ENCODE measurements at regions of chr9 and their contacts with region 1.

Region 1: GRCh38 chr9:123550797-123551196 is 194.8 kb downstream of the CRB2 start:
- DNase-seq: no peak
- ATAC-seq: no peak
- H3K4me3 ChIP-seq: no peak overlapping the region
- H3K27ac ChIP-seq: no peak overlapping the region
- H3K4me1 ChIP-seq: no peaks in the 10 kb centered on the region
- H3K27me3 ChIP-seq: no peaks in the 10 kb centered on the region

Region 2: DNA sequence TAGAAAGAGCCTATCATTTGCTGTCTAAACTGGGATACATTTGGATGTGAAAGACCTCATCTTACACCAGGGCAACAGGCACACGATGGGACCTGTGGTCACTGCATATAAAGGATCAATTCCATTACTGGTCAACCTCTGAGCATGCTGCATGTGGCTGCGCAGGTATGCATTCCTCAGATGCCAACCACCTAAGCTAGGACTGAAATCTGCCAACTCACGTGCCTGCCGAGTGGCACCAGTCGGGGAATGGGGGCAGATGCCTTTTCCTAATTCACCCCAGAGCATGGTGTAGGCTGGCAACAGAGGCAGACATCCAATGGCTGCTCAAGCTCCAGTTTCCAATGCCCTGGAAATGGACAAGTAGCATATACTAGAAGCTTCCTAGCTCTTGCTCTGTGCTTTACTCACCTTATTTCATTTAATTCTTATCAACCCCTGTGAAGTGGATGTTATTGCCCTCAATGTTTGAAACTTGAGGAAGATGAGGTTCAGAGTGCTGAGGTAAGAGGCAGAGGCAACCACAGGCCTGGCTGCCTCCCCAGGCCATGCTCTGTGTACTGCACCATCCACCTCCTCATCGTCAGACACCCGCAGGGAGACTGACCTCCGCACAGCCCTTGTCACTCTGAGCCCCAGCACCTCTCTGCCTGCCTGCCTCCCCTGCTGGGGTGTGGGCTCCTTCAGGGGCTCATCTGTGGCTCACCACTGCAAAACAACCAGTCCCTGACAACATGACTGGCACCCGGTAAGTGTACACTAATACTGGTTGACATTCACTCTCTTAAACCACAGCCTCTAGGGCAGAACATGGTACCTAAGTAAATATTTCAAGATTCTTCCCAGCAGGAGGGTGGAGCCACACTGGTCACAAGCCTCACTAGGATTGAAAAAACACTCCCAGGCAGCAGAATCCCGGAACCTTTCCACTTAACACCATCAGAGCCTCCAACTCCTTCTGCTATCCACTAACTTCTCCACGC is 33.7 kb after region 1 on chr9:
- intact Hi-C with region 1: no loop called
- DNase-seq: no peak
- ATAC-seq: no peak
- H3K4me3 ChIP-seq: no peak overlapping the region
- H3K27ac ChIP-seq: no peak overlapping the region
- H3K4me1 ChIP-seq: no peaks in the 10 kb centered on the region
- H3K27me3 ChIP-seq: no peaks in the 10 kb centered on the region

Region 3: GRCh38 chr9:123960366-123960765 is 409.6 kb after region 1 on chr9:
- intact Hi-C with region 1: loop called in 1 of 4 experiments (anchors 10 kb)
- DNase-seq: no peak
- ATAC-seq: no peak
- H3K4me3 ChIP-seq: no peak overlapping the region
- H3K27ac ChIP-seq: no peak overlapping the region
- H3K4me1 ChIP-seq: no peaks in the 10 kb centered on the region
- H3K27me3 ChIP-seq: no peaks in the 10 kb centered on the region